T-cell (primary cell): ENCODE measurements at regions of chr1 and their contacts with region 1.

Region 1: GRCh38 chr1:198811449-198811848 is 172.6 kb downstream of the PTPRC start:
- DNase-seq: no peak
- ATAC-seq: no peak
- H3K4me3 ChIP-seq: no peak overlapping the region
- H3K4me3 Mint-ChIP-seq: no peak overlapping the region
- H3K27ac ChIP-seq: no peak overlapping the region
- H3K27ac Mint-ChIP-seq: no peak overlapping the region
- H3K4me1 ChIP-seq: no peaks in the 10 kb centered on the region
- H3K4me1 Mint-ChIP-seq: no peaks in the 10 kb centered on the region
- H3K27me3 ChIP-seq: no peaks in the 10 kb centered on the region
- H3K27me3 Mint-ChIP-seq: peaks cover 0 to 1% of the 10 kb centered on the region in 2 donors

Region 2: GRCh38 chr1:198238121-198238520 is 573.3 kb before region 1 on chr1:
- CTCF ChIA-PET with region 1: no interaction called
- POLR2A ChIA-PET with region 1: no interaction called
- DNase-seq: peak in 4 of 35 experiments; percentile 2 to 31 (median 13)
- ATAC-seq: no peak
- H3K4me3 ChIP-seq: no peak overlapping the region
- H3K4me3 Mint-ChIP-seq: no peak overlapping the region
- H3K27ac ChIP-seq: no peak overlapping the region
- H3K27ac Mint-ChIP-seq: no peak overlapping the region
- H3K4me1 ChIP-seq: peaks cover 0 to 10% of the 10 kb centered on the region in 2 experiments
- H3K4me1 Mint-ChIP-seq: peaks cover 27 to 47% (median 46%) of the 10 kb centered on the region in 3 donors
- H3K27me3 ChIP-seq: no peaks in the 10 kb centered on the region
- H3K27me3 Mint-ChIP-seq: no peaks in the 10 kb centered on the region

Region 3: GRCh38 chr1:198788561-198789064 is 22.8 kb before region 1 on chr1:
- CTCF ChIA-PET with region 1: no interaction called
- POLR2A ChIA-PET with region 1: no interaction called
- DNase-seq: peak in 27 of 35 experiments; percentile 1 to 62 (median 23)
- ATAC-seq: peak in 2 of 4 experiments; percentile 23 to 77
- H3K4me3 ChIP-seq: no peak overlapping the region
- H3K4me3 Mint-ChIP-seq: no peak overlapping the region
- H3K27ac ChIP-seq: no peak overlapping the region
- H3K27ac Mint-ChIP-seq: no peak overlapping the region
- H3K4me1 ChIP-seq: no peaks in the 10 kb centered on the region
- H3K4me1 Mint-ChIP-seq: peaks cover 0 to 5% (median 1%) of the 10 kb centered on the region in 3 donors
- H3K27me3 ChIP-seq: no peaks in the 10 kb centered on the region
- H3K27me3 Mint-ChIP-seq: peaks cover 0 to 4% of the 10 kb centered on the region in 2 donors

Region 4: DNA sequence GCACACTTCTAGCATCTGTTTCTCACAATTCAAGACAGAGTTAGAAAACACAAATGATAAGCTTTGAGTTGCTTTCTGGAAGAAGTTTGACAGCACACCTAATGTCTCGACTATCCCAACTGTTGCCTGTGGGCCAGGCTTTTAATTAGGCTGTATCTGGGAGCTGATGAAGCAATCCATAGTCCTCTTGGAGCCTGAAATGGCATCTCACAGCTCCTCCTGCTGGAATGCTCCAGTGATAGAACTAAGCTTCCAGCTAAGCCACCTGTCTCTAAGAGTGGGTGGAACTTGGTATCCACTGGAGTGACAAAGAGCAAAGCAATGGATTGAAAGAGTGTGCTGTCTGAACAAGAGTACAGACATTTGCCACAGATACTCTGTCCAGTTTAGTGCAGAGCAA is 610.7 kb after region 1 on chr1:
- CTCF ChIA-PET with region 1: no interaction called
- POLR2A ChIA-PET with region 1: interaction called in 1 of 2 experiments, 10 read pairs
- DNase-seq: no peak
- ATAC-seq: no peak
- H3K4me3 ChIP-seq: no peak overlapping the region
- H3K4me3 Mint-ChIP-seq: no peak overlapping the region
- H3K27ac ChIP-seq: no peak overlapping the region
- H3K27ac Mint-ChIP-seq: no peak overlapping the region
- H3K4me1 ChIP-seq: no peaks in the 10 kb centered on the region
- H3K4me1 Mint-ChIP-seq: no peaks in the 10 kb centered on the region
- H3K27me3 ChIP-seq: no peaks in the 10 kb centered on the region
- H3K27me3 Mint-ChIP-seq: peaks cover 8 to 18% of the 10 kb centered on the region in 2 donors